ENCODE measurements at regions of chr3 and their contacts with region 1.

Region 1: DNA sequence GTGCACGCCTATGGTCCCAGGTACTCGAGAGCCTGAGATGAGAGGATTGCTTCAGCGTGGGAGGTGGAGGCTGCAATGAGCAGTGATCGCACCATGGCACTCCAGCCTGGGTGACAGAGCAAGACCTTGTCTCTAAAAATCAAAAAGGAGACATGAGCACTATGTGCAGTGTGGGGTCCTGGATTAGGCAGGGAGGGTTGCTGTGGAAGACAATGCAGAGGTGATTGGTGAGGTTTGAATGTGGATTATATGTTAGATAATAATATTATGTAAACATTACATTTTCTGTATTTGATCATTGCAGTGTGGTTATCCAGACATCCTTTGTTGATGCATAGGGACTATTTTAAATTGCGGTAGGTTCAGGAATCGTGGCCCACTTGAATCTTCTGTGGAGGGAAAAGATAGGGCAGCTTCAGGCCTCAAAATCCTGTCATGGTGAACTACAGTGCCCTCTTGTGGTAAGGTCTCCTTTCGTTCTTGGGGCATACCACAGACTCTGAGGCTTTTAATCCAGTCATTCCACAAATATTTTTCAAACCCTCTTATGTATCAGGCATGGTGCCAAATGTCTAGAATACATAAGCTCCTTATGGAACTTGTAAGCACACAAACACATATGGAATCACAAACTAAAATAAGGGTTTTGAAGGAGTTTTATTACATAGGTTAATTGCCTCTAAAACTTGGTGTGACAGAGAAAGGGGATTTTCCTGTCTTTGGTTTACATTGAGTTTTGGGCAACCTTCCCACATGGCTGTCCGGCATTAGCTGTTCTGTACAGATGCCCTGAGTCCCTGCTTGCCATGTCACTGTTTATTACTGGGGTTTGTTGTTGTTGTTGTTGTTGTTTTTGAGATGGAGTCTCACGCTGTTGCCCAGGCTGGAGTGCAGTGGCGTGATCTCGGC is 37.7 kb downstream of the GPD1L start:
- DNase-seq: peak in 1 of 2 donors; percentile 72
- H3K4me3 ChIP-seq: no peak overlapping the region
- H3K27ac ChIP-seq: no peak overlapping the region
- H3K4me1 ChIP-seq: no peaks in the 10 kb centered on the region
- H3K27me3 ChIP-seq: no peaks in the 10 kb centered on the region
- CTCF ChIP-seq: peak; percentile 68 to 80 (median 77)

Region 2: GRCh38 chr3:31610700-31611275 is 533.3 kb before region 1 on chr3:
- intact Hi-C with region 1: loop called (anchors 10 kb)
- DNase-seq: no peak
- H3K4me3 ChIP-seq: no peak overlapping the region
- H3K27ac ChIP-seq: no peak overlapping the region
- H3K4me1 ChIP-seq: no peaks in the 10 kb centered on the region
- H3K27me3 ChIP-seq: no peaks in the 10 kb centered on the region
- CTCF ChIP-seq: peak; percentile 21 to 37 (median 27)

Region 3: GRCh38 chr3:32018757-32019564 is 125.1 kb before region 1 on chr3:
- intact Hi-C with region 1: loop called (anchors 1 kb)
- DNase-seq: no peak
- H3K4me3 ChIP-seq: no peak overlapping the region
- H3K27ac ChIP-seq: no peak overlapping the region
- H3K4me1 ChIP-seq: no peaks in the 10 kb centered on the region
- H3K27me3 ChIP-seq: no peaks in the 10 kb centered on the region
- CTCF ChIP-seq: peak; percentile 67 to 78 (median 69)

Region 4: DNA sequence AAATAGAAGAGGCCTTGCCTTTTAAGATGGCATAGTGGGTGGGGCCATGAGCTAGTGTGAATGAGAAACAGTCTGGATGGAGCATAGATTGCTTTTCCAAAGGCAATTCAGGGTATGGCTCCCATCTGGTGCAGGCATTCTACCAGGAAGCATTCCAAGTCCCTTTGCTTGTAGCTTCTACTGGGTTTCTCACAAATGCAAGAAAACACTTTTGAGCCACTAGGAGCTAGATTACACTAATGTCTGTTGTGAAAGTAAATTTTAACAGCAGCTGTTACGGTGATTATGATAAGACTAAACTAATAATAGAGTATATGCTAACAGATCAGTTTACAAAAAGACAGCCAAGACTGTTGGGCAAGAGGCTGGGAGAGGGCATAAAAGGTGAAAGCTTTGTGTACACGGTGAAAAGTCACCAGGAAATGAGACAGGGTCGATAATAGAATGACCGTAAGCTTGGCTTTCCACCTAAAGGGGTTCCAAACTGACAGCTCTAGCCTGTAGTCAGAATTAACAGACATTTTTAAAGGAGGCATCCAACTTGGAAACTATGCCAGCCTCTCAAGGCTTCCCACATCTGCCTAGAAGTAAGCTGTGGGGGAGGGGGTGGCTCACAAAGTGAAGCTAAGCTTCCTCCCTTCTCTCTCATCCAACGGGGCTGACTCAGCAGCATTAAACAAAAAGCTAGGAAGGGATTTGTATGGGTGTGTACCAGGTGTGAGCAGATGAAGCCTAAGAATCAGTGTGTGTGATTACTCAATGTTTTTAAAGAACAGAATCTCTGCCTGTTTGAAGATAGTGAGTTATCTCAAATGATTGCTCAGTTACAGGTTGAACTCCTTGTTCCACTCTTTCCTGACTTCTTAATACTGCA is 98.8 kb before region 1 on chr3:
- intact Hi-C with region 1: no loop called
- DNase-seq: peak in 1 of 2 donors; percentile 62
- H3K4me3 ChIP-seq: peak overlapping the region; percentile 26 to 28
- H3K27ac ChIP-seq: peak overlapping the region; percentile 69 to 73
- H3K4me1 ChIP-seq: peaks cover 0 to 10% of the 10 kb centered on the region in 2 donors
- H3K27me3 ChIP-seq: no peaks in the 10 kb centered on the region
- CTCF ChIP-seq: no peak